Activated CD4-positive, alpha-beta memory T cell treated with anti-CD3 and anti-CD28 coated beads, Interleukin-2, amount 10 ng/mL, durations not matched to agents 7 days and 5 days (primary cell): ENCODE measurements at regions of chr2 and their contacts with region 1.

Region 1: DNA sequence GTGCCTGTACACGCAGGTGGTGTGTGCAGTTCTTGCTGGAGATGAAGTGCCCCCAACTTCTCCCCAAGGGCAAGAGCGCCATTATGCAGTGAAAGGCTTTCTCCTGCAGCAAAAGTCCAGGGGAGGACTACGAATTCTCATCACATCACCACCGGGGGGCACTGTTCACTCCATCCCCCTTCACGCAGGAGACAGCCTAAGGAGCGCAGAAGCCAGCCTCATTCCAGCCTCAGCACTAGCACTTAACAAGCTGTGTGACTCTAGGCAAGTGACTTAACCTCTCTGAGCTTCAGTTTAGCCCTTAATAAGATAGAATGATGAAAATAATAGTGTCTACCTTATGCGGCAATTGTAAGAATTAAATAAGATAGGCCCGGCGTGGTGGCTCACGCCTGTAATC is 32.3 kb downstream of the DNMT3A start:
- DNase-seq: peak; percentile 66
- H3K4me3 Mint-ChIP-seq: no peak overlapping the region
- H3K27ac Mint-ChIP-seq: no peak overlapping the region
- H3K4me1 Mint-ChIP-seq: peaks cover 54% of the 10 kb centered on the region
- H3K27me3 Mint-ChIP-seq: no peaks in the 10 kb centered on the region

Region 2: DNA sequence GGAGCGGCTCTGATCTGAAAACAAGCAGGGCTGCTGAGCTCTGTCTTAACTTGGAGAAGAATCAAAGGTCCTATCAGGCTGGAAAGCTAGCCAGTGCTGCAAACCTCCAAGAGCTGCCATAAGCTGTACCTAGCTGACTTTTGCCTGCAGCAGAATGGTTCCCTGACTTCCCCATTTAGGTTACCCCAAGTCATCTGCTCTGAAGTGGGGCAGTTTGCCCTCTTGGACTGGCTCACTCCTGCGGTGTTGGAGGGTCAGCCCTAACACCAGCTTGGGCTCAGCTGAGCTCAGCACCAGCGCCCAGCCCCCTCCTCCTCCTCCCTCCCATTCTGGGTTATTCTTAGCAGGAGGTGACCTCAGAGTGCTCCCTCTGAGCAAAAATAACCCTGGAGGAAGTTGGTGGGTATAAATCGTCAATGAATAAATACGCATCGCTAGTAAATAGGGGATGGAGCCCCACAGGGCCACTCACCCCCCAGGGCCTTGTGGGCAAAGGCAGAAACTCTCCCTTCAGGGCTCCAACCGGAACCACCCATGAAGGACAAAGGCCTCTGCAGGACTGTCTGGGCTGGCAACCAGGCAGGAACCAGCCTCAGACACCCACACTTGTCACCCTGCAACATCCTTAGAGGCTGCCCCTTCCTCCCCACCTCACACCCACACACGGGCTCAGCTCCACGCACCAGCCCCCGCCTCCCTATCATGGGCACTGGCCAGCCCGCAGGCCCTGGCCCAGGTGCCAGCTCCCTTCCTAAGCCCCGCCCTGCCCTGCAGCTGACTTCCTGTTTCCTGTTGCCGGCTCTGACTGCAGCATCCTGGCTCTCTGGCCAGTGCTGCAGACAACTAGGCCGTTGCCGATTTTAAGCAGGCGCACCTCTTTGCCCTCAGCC is 14.6 kb before region 1 on chr2:
- CTCF ChIA-PET with region 1: interaction called, 4 read pairs
- POLR2A ChIA-PET with region 1: interaction called, 48 read pairs
- DNase-seq: peak; percentile 90
- H3K4me3 Mint-ChIP-seq: peak overlapping the region; percentile 62
- H3K27ac Mint-ChIP-seq: peak overlapping the region; percentile 94
- H3K4me1 Mint-ChIP-seq: peaks cover 38% of the 10 kb centered on the region
- H3K27me3 Mint-ChIP-seq: no peaks in the 10 kb centered on the region

Region 3: GRCh38 chr2:25505630-25506029 is 196.2 kb after region 1 on chr2:
- CTCF ChIA-PET with region 1: no interaction called
- POLR2A ChIA-PET with region 1: no interaction called
- DNase-seq: no peak
- H3K4me3 Mint-ChIP-seq: no peak overlapping the region
- H3K27ac Mint-ChIP-seq: no peak overlapping the region
- H3K4me1 Mint-ChIP-seq: no peaks in the 10 kb centered on the region
- H3K27me3 Mint-ChIP-seq: no peaks in the 10 kb centered on the region

Region 4: DNA sequence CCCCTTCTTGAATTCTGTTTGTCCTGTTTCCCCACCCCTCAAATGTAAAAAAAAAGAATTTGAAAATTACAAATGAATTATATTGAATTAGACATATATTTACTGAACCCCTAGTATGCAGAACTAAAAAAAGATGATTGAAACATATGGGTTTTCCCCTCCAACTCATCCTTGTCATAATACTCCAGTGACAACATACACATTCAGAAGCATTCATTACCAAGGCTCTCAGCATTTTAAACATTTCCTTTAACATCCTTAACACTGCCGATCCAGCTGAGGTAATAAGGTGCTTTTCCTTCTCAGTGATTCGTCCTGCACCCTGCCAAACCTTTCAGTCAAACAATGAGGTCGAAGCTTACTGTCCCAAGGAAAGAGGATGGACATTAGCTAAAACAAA is 417.1 kb after region 1 on chr2:
- CTCF ChIA-PET with region 1: no interaction called
- POLR2A ChIA-PET with region 1: no interaction called
- DNase-seq: no peak
- H3K4me3 Mint-ChIP-seq: no peak overlapping the region
- H3K27ac Mint-ChIP-seq: no peak overlapping the region
- H3K4me1 Mint-ChIP-seq: peaks cover 17% of the 10 kb centered on the region
- H3K27me3 Mint-ChIP-seq: peaks cover 6% of the 10 kb centered on the region